CD4-positive, alpha-beta T cell (primary cell): ENCODE measurements at regions of chr19 and their contacts with region 1.

Region 1: DNA sequence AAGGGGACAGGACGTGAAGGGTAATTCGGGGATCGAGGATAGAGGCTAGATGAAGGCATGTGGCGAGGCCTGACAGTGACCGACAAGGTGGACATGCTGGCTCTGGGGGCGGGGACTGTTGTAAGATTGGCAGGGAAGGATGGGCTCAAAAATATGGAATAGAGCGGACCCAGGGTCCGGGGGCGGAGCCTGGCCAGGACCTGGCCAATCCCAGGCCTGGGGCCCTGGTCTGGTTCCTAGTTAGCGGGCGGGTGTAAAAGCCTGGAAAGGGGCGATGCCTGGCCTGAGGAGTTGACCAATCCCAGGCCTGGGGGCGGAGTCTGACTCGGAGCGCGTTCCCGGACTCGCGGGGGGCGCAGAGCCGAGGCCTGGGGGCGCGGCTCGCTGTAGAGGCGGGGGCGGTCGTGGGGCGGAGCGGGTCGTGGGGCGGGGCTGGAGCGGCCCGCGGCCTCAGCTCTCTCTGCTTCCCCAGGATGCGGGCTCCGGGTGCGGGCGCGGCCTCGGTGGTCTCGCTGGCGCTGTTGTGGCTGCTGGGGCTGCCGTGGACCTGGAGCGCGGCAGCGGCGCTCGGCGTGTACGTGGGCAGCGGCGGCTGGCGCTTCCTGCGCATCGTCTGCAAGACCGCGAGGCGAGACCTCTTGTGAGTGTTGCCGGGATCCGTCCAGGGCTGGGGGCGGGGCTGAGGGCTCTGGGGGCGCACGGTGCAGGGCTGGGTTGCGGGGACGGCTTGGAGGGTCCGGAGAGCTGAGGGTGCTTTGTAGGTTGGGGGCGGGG is at the start of gene SLC27A1:
- DNase-seq: peak; percentile 73 to 95 (median 84)
- ATAC-seq: peak; percentile 62
- H3K4me3 ChIP-seq: peak within 1 kb of the TSS; percentile 88
- H3K4me3 Mint-ChIP-seq: peak within 1 kb of the TSS; percentile 87
- H3K27ac ChIP-seq: peak within 1 kb of the TSS; percentile 57 to 75
- H3K27ac Mint-ChIP-seq: peak within 1 kb of the TSS; percentile 34
- H3K4me1 ChIP-seq: peaks cover 36% of the 10 kb centered on the region
- H3K4me1 Mint-ChIP-seq: peaks cover 24% of the 10 kb centered on the region
- H3K27me3 ChIP-seq: no peaks in the 10 kb centered on the region
- H3K27me3 Mint-ChIP-seq: peaks cover 3% of the 10 kb centered on the region
- CTCF ChIP-seq: no peak
- total RNA-seq, gene SLC27A1: 3.0 TPM

Region 2: DNA sequence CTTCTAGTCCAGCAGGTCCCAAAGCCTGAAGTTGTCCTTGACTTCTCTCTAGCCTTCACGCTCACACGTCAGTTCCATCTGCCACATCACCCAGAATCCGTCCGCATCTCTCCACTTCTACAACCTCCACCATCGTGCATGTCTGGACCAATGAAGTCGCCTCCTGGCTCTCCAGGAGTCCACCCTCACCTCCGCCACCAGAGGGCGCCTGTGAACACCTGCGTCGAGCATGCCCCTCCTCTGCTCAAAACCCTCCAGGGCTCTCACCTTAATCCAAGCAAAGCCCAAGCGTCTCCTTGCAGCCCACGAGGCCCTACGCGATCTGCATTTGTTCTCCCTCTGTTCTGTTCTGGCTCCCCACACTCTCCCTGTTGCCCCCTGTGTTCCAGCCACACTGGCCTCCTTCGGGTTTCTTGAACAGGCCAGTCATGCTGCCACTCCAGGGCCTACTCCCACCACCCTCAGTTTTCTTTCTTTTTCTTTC is 209.4 kb before region 1 on chr19:
- CTCF ChIA-PET with region 1: no interaction called
- POLR2A ChIA-PET with region 1: no interaction called
- intact Hi-C with region 1: loop called (anchors 5 kb)
- DNase-seq: peak; percentile 83 to 94 (median 89)
- ATAC-seq: peak; percentile 100
- H3K4me3 ChIP-seq: no peak overlapping the region
- H3K4me3 Mint-ChIP-seq: no peak overlapping the region
- H3K27ac ChIP-seq: no peak overlapping the region
- H3K27ac Mint-ChIP-seq: no peak overlapping the region
- H3K4me1 ChIP-seq: peaks cover 18% of the 10 kb centered on the region
- H3K4me1 Mint-ChIP-seq: peaks cover 5% of the 10 kb centered on the region
- H3K27me3 ChIP-seq: no peaks in the 10 kb centered on the region
- H3K27me3 Mint-ChIP-seq: no peaks in the 10 kb centered on the region
- CTCF ChIP-seq: peak; percentile 88

Region 3: GRCh38 chr19:17292286-17293097 is 177.8 kb before region 1 on chr19:
- CTCF ChIA-PET with region 1: no interaction called
- POLR2A ChIA-PET with region 1: no interaction called
- intact Hi-C with region 1: loop called in 1 of 2 experiments (anchors 5 kb)
- DNase-seq: peak; percentile 58 to 91 (median 71)
- ATAC-seq: peak; percentile 98
- H3K4me3 ChIP-seq: peak overlapping the region; percentile 83
- H3K4me3 Mint-ChIP-seq: peak overlapping the region; percentile 92
- H3K27ac ChIP-seq: no peak overlapping the region
- H3K27ac Mint-ChIP-seq: peak overlapping the region; percentile 19
- H3K4me1 ChIP-seq: peaks cover 18% of the 10 kb centered on the region
- H3K4me1 Mint-ChIP-seq: peaks cover 9% of the 10 kb centered on the region
- H3K27me3 ChIP-seq: no peaks in the 10 kb centered on the region
- H3K27me3 Mint-ChIP-seq: peaks cover 4% of the 10 kb centered on the region
- CTCF ChIP-seq: peak; percentile 84

Region 4: GRCh38 chr19:17390665-17391370 is 79.4 kb before region 1 on chr19:
- CTCF ChIA-PET with region 1: interaction called, 3 read pairs
- POLR2A ChIA-PET with region 1: no interaction called
- intact Hi-C with region 1: loop called in 1 of 2 experiments (anchors 5 kb)
- DNase-seq: peak; percentile 83 to 95 (median 87)
- ATAC-seq: peak; percentile 99
- H3K4me3 ChIP-seq: peak overlapping the region; percentile 74
- H3K4me3 Mint-ChIP-seq: peak overlapping the region; percentile 93
- H3K27ac ChIP-seq: no peak overlapping the region
- H3K27ac Mint-ChIP-seq: no peak overlapping the region
- H3K4me1 ChIP-seq: peaks cover 32% of the 10 kb centered on the region
- H3K4me1 Mint-ChIP-seq: peaks cover 23% of the 10 kb centered on the region
- H3K27me3 ChIP-seq: no peaks in the 10 kb centered on the region
- H3K27me3 Mint-ChIP-seq: no peaks in the 10 kb centered on the region
- CTCF ChIP-seq: peak; percentile 67

Region 5: DNA sequence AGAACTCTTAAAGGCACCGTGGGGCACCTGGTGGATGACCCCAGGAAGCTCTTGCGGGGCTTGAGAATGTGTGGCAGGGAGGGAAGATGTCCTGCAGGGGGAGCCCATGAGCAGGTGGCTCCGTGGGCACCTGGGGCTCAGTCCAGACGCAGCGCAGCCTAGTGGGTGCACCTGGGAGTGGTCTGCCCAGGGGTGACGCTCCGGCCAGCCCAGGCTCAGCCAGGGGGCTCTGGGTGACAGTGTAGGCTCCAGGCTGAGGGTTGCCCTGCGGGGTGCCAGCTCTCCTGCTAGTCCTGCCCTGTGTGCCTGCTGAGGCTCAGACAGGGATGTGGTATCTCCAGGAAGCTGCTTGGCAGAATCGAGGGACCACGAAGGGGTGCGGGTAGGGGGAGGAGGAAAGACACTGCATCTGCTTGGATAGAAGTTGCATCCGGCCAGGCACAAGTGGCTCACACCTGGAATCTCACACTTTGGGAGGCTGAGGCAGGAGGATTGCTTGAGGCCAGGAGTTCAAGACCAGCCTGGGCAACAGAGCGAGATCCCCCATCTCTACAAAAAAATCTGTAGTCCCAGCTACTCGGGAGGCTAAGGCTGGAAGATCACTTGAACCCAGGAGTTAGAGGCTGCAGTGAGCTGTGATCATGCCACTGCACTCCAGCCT is 26.2 kb after region 1 on chr19:
- CTCF ChIA-PET with region 1: interaction called, 12 read pairs
- POLR2A ChIA-PET with region 1: interaction called, 3 read pairs
- intact Hi-C with region 1: no loop called
- DNase-seq: peak; percentile 68 to 91 (median 76)
- ATAC-seq: peak; percentile 99
- H3K4me3 ChIP-seq: no peak overlapping the region
- H3K4me3 Mint-ChIP-seq: no peak overlapping the region
- H3K27ac ChIP-seq: no peak overlapping the region
- H3K27ac Mint-ChIP-seq: no peak overlapping the region
- H3K4me1 ChIP-seq: peaks cover 25% of the 10 kb centered on the region
- H3K4me1 Mint-ChIP-seq: peaks cover 17% of the 10 kb centered on the region
- H3K27me3 ChIP-seq: no peaks in the 10 kb centered on the region
- H3K27me3 Mint-ChIP-seq: no peaks in the 10 kb centered on the region
- CTCF ChIP-seq: peak; percentile 96